ENCODE measurements at regions of chr20 and their contacts with region 1.

Region 1: GRCh38 chr20:3323398-3323797 is 84.1 kb downstream of the DNAAF9 start:
- DNase-seq: no peak
- H3K4me3 ChIP-seq: no peak overlapping the region
- H3K27ac ChIP-seq: no peak overlapping the region
- H3K4me1 ChIP-seq: no peaks in the 10 kb centered on the region
- H3K27me3 ChIP-seq: no peaks in the 10 kb centered on the region
- CTCF ChIP-seq: no peak
- POLR2A ChIP-seq: no peak

Region 2: GRCh38 chr20:3051385-3052019 is 271.9 kb before region 1 on chr20:
- intact Hi-C with region 1: loop called (anchors 10 kb)
- DNase-seq: no peak
- H3K4me3 ChIP-seq: no peak overlapping the region
- H3K27ac ChIP-seq: no peak overlapping the region
- H3K4me1 ChIP-seq: peaks cover 9 to 11% of the 10 kb centered on the region in 2 donors
- H3K27me3 ChIP-seq: no peaks in the 10 kb centered on the region
- CTCF ChIP-seq: no peak
- POLR2A ChIP-seq: no peak

Region 3: GRCh38 chr20:3276680-3277015 is 46.8 kb before region 1 on chr20:
- intact Hi-C with region 1: no loop called
- DNase-seq: peak in 1 of 2 donors; percentile 24
- H3K4me3 ChIP-seq: no peak overlapping the region
- H3K27ac ChIP-seq: no peak overlapping the region
- H3K4me1 ChIP-seq: peaks cover 0 to 4% of the 10 kb centered on the region in 2 donors
- H3K27me3 ChIP-seq: no peaks in the 10 kb centered on the region
- CTCF ChIP-seq: peak in 4 of 6 experiments; percentile 28 to 44 (median 32)
- POLR2A ChIP-seq: no peak

Measured in thyroid gland (tissue), 4 donors.